ENCODE measurements at regions of chr11 and their contacts with region 1.

Region 1: DNA sequence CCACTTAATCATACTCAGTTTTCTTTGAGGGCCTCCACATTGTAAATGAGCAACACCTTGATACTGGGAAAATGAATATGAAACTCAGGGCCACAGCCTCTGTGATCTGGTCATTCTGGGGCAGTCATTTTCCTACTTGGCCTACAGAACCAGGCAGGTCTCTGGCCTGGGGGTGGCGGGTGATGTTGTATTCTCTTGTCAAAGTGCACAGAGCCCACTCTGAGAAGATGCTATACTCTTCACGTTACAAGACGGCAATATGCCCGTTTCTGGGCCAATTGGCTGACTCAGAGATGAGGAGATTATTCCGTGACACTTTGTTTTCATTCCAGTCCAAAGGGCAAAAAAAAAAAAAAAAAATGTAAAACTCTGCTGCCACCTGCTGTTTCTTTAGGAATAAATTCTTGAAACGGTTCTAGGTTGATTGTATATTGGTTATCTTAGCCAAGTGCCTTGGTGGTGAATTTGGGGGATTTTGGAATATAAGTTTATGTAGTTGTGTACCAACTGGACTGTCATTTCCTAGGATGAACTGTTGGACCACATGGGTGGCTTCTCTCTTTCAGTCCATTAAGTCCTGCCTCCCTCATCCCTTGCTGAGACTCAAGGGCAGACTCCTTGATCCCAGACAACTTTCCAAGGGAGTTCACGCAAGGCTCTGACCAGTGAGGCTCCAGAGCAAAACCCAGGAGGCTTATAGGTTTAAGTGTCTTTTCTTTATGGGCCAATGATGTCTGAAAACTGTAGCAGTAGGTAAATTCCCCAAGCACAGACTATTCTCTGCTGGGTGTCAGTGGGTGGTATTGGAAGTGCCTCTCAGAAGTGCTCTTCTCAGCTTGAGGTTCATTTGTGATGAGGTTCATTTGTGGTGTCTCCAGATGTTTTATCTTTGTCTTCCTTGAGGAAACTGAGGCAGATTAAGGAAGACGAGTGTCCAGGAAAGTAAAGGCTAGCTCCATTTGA is 18.2 kb downstream of the ADM start:
- DNase-seq: peak; percentile 24
- H3K4me3 ChIP-seq: peak overlapping the region; percentile 11
- H3K27ac ChIP-seq: peak overlapping the region; percentile 48
- H3K4me1 ChIP-seq: peaks cover 58% of the 10 kb centered on the region
- H3K27me3 ChIP-seq: no peaks in the 10 kb centered on the region
- CTCF ChIP-seq: peak; percentile 64

Region 2: GRCh38 chr11:9861860-9862725 is 461.0 kb before region 1 on chr11:
- intact Hi-C with region 1: loop called (anchors 10 kb)
- DNase-seq: no peak
- H3K4me3 ChIP-seq: no peak overlapping the region
- H3K27ac ChIP-seq: no peak overlapping the region
- H3K4me1 ChIP-seq: peaks cover 14% of the 10 kb centered on the region
- H3K27me3 ChIP-seq: no peaks in the 10 kb centered on the region
- CTCF ChIP-seq: peak; percentile 79

Region 3: DNA sequence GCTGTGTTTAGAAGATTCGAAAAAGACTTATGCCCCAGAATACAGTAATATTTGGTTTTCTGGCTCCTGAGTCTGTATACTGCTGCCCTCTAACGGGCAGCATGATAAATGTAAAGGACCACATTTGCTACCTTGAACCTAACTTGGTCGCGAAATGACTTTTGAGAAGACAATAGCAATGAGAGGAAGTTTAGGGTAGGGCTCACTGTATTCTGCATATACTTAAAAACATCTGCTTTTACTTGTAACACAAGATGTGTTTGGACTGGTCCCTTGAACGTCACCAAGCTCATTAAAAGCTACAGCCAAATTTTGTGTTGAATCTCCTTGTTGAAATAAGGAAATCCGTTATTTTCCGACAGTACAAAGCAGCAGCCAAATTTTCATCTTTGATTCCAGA is 350.1 kb before region 1 on chr11:
- intact Hi-C with region 1: loop called (anchors 10 kb)
- DNase-seq: no peak
- H3K4me3 ChIP-seq: no peak overlapping the region
- H3K27ac ChIP-seq: no peak overlapping the region
- H3K4me1 ChIP-seq: peaks cover 28% of the 10 kb centered on the region
- H3K27me3 ChIP-seq: no peaks in the 10 kb centered on the region
- CTCF ChIP-seq: peak; percentile 80

Region 4: GRCh38 chr11:10255388-10256125 is 67.6 kb before region 1 on chr11:
- intact Hi-C with region 1: no loop called
- DNase-seq: no peak
- H3K4me3 ChIP-seq: no peak overlapping the region
- H3K27ac ChIP-seq: no peak overlapping the region
- H3K4me1 ChIP-seq: peaks cover 16% of the 10 kb centered on the region
- H3K27me3 ChIP-seq: no peaks in the 10 kb centered on the region
- CTCF ChIP-seq: no peak

Region 5: DNA sequence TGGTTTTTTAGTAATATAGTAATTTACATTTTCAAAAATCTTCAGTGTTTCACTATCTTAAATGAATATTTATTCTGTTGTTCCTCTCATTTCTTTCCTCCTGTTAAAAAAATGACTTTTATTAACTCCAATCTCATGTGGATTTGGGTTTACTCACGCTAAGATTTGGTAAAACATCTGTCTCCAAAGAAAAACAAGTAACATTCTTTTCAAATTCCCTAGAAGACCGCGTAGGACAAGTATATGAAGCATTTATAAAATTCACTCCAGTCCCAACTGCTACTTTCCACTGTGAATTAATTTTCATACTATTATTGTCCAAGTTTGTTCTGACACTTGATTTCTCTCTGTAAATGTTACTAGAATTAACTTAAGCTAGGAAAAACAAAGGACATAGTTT is 55.3 kb before region 1 on chr11:
- intact Hi-C with region 1: no loop called
- DNase-seq: no peak
- H3K4me3 ChIP-seq: no peak overlapping the region
- H3K27ac ChIP-seq: no peak overlapping the region
- H3K4me1 ChIP-seq: peaks cover 10% of the 10 kb centered on the region
- H3K27me3 ChIP-seq: no peaks in the 10 kb centered on the region
- CTCF ChIP-seq: no peak

Region 6: DNA sequence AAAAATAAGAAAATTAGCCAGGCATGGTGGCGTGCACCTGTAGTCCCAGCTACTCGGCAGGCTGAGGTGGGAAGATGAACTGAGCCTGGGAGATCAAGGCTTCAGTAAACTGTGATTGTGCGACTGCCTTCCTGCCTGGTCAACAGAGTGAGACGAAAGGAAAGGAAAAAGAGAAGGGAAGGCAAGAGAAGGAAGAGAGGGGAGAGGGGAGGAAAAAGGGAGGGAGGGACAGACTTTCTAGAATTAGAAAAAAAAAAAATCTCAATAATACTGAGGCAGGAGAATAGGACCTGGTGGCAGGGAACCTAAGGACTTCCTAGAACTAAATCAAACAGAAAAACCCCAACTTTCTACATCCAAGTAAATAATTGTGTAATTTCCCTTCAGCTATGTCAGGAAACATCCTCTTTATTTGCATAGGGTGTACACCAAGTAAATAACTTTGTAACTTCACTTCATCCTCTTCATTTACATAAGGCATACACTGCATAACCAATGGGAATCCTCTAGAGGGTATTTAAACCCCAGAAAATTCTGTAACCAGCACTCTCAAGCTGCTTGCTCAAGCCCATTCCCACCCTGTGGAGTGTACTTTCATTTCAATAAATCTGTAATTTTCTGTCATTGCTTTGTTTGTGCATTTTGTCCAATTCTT is 37.8 kb before region 1 on chr11:
- intact Hi-C with region 1: no loop called
- DNase-seq: no peak
- H3K4me3 ChIP-seq: no peak overlapping the region
- H3K27ac ChIP-seq: no peak overlapping the region
- H3K4me1 ChIP-seq: peaks cover 21% of the 10 kb centered on the region
- H3K27me3 ChIP-seq: no peaks in the 10 kb centered on the region
- CTCF ChIP-seq: no peak